Right ventricle myocardium inferior (tissue), 1 donor: ENCODE measurements at regions of chr3 and their contacts with region 1.

Region 1: GRCh38 chr3:10026084-10026890 is at the start of gene FANCD2:
- DNase-seq: peak; percentile 94
- ATAC-seq: peak; percentile 91
- total RNA-seq, gene FANCD2: 1.0 TPM

Region 2: DNA sequence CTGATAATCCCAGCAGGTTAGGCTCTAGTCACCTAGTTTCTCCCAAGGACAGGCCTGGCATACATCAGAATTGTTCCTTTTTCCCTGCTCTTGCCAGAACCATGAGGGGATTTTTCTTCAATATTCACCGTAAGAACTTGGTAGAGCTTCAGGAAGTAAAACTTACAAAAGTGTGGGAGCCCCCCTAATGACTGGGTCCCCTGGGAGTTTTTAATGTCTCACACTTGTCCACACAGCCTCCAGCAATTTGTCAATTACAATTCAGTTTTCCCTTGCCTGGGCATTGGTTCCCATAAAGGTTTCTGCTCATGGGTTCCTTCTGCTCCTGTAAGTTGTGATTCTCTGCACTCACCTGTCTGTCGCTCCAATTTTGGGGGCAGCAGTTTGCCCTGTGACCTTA is 501.2 kb before region 1 on chr3:
- intact Hi-C with region 1: no loop called
- DNase-seq: no peak
- ATAC-seq: no peak

Region 3: DNA sequence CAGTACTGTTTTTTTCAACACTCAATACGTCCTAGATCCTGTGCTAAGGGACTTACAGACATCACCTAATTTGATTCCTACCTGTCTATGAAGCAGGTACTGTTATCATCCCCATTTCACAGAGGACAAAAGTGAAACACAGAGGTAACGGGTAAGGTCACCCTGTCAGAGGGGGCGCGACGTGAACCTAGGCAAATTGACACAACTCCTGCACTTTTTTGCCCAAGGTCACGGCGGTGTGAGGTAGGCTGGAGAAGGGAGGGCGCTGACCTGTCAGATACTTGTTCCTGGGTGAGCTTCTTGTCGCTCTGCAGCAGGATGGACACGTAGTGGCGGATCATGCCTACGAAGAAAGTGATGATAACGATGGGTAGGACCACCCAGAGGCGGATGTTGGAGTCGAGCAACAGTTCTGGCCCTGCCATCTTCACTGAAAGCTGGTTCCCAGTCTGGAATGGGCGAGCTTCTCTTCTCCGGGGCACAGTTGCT is 40.0 kb before region 1 on chr3:
- intact Hi-C with region 1: loop called (anchors 1 kb)
- DNase-seq: no peak
- ATAC-seq: peak; percentile 26

Region 4: DNA sequence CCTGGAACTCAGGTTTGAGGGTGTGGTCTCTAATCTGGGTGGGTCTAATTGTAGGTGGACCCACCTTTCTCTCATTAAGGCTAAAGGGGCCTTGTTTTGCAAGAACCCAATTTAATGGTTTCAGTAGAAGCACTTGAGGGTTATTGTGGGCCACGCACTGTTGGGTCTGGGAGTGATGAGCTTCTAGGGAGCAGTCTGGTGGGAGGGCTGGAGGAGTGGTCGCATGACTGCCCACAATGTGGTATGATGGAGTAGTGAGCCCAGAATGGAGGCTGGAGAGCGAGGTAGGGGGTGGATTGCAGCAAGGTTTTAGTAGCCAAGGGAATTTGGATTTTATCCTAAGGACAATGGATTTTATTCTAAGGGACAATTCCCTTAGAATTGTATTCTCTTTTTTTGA is 224.7 kb after region 1 on chr3:
- intact Hi-C with region 1: no loop called
- DNase-seq: no peak
- ATAC-seq: no peak